ENCODE measurements at regions of chr15 and their contacts with region 1.

Region 1: DNA sequence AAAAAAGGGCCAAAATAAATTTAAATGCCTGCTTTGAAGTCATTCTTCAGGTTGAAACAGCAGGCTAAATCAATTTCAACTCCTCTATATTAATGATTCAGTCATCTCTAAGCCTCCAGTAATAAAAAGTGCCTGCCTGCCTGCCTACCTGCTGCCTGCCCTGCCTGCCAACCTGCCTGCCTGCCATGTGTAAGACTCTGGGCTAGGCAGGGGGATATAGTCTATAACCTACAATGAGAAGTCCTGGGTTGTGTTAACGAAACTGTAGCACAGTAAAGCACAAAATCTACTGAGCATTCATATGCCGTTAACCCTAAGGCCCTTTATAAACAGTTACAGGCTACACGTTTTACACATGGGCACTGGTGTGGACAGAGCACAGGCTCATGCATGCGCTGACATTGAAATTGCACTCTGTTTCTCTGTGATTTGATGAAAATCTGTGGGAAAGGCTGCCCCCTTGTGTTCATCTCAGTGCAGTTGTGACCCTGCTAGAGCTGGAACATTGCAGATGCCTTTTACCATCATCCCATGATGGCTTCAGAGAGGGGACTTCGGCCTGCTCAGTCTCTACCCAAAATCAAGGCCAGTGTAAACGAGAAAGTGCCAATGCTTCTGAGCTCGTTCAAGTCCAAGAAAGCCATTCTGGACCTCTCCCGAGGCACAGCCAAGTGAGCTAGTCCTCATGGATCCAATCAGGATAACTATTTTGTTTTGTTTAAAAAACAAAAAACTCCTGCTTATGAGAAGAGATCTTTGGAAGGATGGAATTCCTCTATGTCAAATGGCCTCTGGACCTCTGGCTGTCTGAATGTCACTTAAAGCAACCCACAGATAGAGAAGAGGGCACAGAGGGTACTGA is 64.6 kb downstream of the EFL1 start:
- ATAC-seq: peak; percentile 99 to 100 (median 100)
- H3K4me3 ChIP-seq: no peak overlapping the region
- H3K27ac ChIP-seq: no peak overlapping the region
- H3K4me1 ChIP-seq: peaks cover 2% of the 10 kb centered on the region in 2 donors

Region 2: GRCh38 chr15:82108489-82109078 is 89.4 kb before region 1 on chr15:
- in situ Hi-C with region 1: loop called in 1 of 9 experiments (anchors 10 kb)
- ATAC-seq: peak in 3 of 8 experiments; percentile 43 to 89 (median 66)
- H3K4me3 ChIP-seq: no peak overlapping the region
- H3K27ac ChIP-seq: no peak overlapping the region
- H3K4me1 ChIP-seq: peaks cover 3 to 9% of the 10 kb centered on the region in 2 donors

Measured in motor neuron (in vitro differentiated cells).